PC-3 (cell line): ENCODE measurements at regions of chr1 and their contacts with region 1.

Region 1: GRCh38 chr1:183234660-183235476 is 48.8 kb downstream of the LAMC2 start:
- DNase-seq: peak; percentile 90
- ATAC-seq: peak; percentile 89
- H3K4me3 ChIP-seq: peak overlapping the region; percentile 54
- H3K27ac ChIP-seq: peak overlapping the region; percentile 99
- H3K4me1 ChIP-seq: peaks cover 42% of the 10 kb centered on the region
- H3K27me3 ChIP-seq: no peaks in the 10 kb centered on the region
- CTCF ChIP-seq: peak; percentile 76

Region 2: DNA sequence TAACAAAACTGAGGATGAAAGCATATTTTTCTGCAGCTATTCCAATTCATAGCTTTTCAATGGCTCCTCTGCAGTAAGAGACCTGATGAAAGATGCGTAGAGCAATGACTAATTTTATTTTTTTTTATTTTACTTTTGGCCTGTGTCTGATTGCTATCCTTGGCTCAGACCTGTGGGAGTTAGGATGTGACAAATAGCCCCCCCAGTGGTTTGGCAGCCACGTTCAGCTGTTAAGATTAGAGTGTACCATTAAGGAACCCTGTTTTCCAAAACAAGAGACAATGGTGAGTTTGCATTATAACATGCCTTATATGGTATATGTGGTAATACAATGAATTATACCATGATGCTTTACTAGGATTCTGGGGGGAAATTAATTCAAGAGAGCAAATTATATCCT is 1486.9 kb before region 1 on chr1:
- CTCF ChIA-PET with region 1: no interaction called
- POLR2A ChIA-PET with region 1: no interaction called
- intact Hi-C with region 1: no loop called
- DNase-seq: no peak
- ATAC-seq: no peak
- H3K4me3 ChIP-seq: no peak overlapping the region
- H3K27ac ChIP-seq: no peak overlapping the region
- H3K4me1 ChIP-seq: no peaks in the 10 kb centered on the region
- H3K27me3 ChIP-seq: no peaks in the 10 kb centered on the region
- CTCF ChIP-seq: no peak

Region 3: DNA sequence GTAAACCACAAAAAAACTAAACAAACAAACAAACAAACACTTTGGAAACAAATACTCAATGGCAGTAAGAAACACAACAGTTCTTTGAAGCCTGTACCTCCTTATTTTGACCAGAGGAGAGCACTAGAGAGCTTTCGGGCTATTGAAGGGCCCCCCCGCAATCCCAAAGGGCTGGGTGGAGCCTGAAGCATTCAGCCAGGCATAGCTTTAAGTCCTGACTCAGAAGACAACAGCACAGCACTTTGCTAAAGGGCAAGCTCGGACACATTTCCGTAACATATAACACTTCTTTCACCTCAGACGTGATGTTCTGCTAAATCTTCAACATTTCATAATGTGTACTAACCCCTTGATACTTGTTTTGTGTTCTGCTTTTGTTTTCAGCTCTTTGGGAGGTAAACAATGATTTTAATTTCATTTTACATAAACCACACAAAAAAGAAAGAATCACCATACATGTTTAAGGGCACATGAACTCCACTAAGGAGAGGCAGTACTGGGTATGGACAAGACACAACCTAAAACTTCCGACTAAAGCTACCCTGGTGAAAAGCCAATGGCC is 272.2 kb before region 1 on chr1:
- CTCF ChIA-PET with region 1: interaction called, 5 read pairs
- POLR2A ChIA-PET with region 1: interaction called, 4 read pairs
- intact Hi-C with region 1: loop called (anchors 2 kb)
- DNase-seq: peak; percentile 80
- ATAC-seq: peak; percentile 100
- H3K4me3 ChIP-seq: peak overlapping the region; percentile 60
- H3K27ac ChIP-seq: peak overlapping the region; percentile 43
- H3K4me1 ChIP-seq: peaks cover 5% of the 10 kb centered on the region
- H3K27me3 ChIP-seq: no peaks in the 10 kb centered on the region
- CTCF ChIP-seq: peak; percentile 90

Region 4: GRCh38 chr1:183070923-183071618 is 163.8 kb before region 1 on chr1:
- CTCF ChIA-PET with region 1: interaction called, 4 read pairs
- POLR2A ChIA-PET with region 1: no interaction called
- intact Hi-C with region 1: loop called (anchors 10 kb)
- DNase-seq: peak; percentile 69
- ATAC-seq: peak; percentile 43
- H3K4me3 ChIP-seq: 0 out of 2 replicates have a peak overlapping the region, but pooled peaks have one; percentile 26
- H3K27ac ChIP-seq: peak overlapping the region; percentile 96
- H3K4me1 ChIP-seq: peaks cover 46% of the 10 kb centered on the region
- H3K27me3 ChIP-seq: no peaks in the 10 kb centered on the region
- CTCF ChIP-seq: no peak

Region 5: GRCh38 chr1:183139281-183139942 is 95.5 kb before region 1 on chr1:
- CTCF ChIA-PET with region 1: no interaction called
- POLR2A ChIA-PET with region 1: no interaction called
- intact Hi-C with region 1: loop called (anchors 1 kb)
- DNase-seq: peak; percentile 85
- ATAC-seq: peak; percentile 87
- H3K4me3 ChIP-seq: peak overlapping the region; percentile 26; the same call in 1 of the 2 replicates
- H3K27ac ChIP-seq: peak overlapping the region; percentile 96
- H3K4me1 ChIP-seq: peaks cover 31% of the 10 kb centered on the region
- H3K27me3 ChIP-seq: no peaks in the 10 kb centered on the region
- CTCF ChIP-seq: no peak

Region 6: GRCh38 chr1:183159960-183160359 is 74.9 kb before region 1 on chr1:
- CTCF ChIA-PET with region 1: no interaction called
- POLR2A ChIA-PET with region 1: no interaction called
- intact Hi-C with region 1: loop called (anchors 2 kb)
- DNase-seq: peak; percentile 98
- ATAC-seq: peak; percentile 74
- H3K4me3 ChIP-seq: no peak overlapping the region
- H3K27ac ChIP-seq: peak overlapping the region; percentile 98
- H3K4me1 ChIP-seq: peaks cover 63% of the 10 kb centered on the region
- H3K27me3 ChIP-seq: no peaks in the 10 kb centered on the region
- CTCF ChIP-seq: no peak